ENCODE measurements at regions of chr3 and their contacts with region 1.

Region 1: GRCh38 chr3:111080413-111080812 is 8.8 kb downstream of the NECTIN3 start:
- DNase-seq: peak in 3 of 14 experiments; percentile 34 to 36 (median 35)
- ATAC-seq: no peak
- H3K4me3 ChIP-seq: no peak overlapping the region
- H3K4me3 Mint-ChIP-seq: no peak overlapping the region
- H3K27ac ChIP-seq: no peak overlapping the region
- H3K27ac Mint-ChIP-seq: no peak overlapping the region
- H3K4me1 ChIP-seq: no peaks in the 10 kb centered on the region
- H3K4me1 Mint-ChIP-seq: peaks cover under 1% of the 10 kb centered on the region
- H3K27me3 ChIP-seq: no peaks in the 10 kb centered on the region
- H3K27me3 Mint-ChIP-seq: peaks cover 15% of the 10 kb centered on the region
- CTCF ChIP-seq: peak; percentile 72

Region 2: GRCh38 chr3:109731620-109732473 is 1348.6 kb before region 1 on chr3:
- CTCF ChIA-PET with region 1: no interaction called
- POLR2A ChIA-PET with region 1: no interaction called
- intact Hi-C with region 1: loop called (anchors 2 to 5 kb)
- DNase-seq: peak; percentile 0 to 78 (median 50)
- ATAC-seq: peak; percentile 88
- H3K4me3 ChIP-seq: no peak overlapping the region
- H3K4me3 Mint-ChIP-seq: no peak overlapping the region
- H3K27ac ChIP-seq: no peak overlapping the region
- H3K27ac Mint-ChIP-seq: no peak overlapping the region
- H3K4me1 ChIP-seq: peaks cover 2% of the 10 kb centered on the region
- H3K4me1 Mint-ChIP-seq: peaks cover 13% of the 10 kb centered on the region
- H3K27me3 ChIP-seq: no peaks in the 10 kb centered on the region
- H3K27me3 Mint-ChIP-seq: no peaks in the 10 kb centered on the region
- CTCF ChIP-seq: peak; percentile 90

Region 3: DNA sequence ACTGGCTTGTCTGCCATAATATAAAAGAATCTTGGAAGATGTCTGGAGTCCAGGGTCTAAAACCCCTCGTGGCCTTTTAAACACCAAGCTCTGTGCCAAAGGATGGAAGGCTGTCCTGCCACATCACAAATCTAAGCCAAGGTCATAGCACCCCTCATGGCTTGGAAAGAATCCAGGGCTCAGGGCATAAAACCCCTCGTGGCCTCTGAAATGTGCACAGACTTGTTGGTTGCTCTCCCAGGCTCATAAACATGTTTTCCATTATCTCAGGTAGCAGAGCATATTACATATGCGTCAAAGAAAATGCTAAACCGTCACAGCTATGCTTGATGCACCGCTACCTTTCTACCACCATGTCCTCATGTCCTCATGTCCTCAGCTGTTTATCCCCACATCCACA is 25.6 kb before region 1 on chr3:
- CTCF ChIA-PET with region 1: no interaction called
- POLR2A ChIA-PET with region 1: no interaction called
- intact Hi-C with region 1: no loop called
- DNase-seq: no peak
- ATAC-seq: no peak
- H3K4me3 ChIP-seq: no peak overlapping the region
- H3K4me3 Mint-ChIP-seq: no peak overlapping the region
- H3K27ac ChIP-seq: no peak overlapping the region
- H3K27ac Mint-ChIP-seq: no peak overlapping the region
- H3K4me1 ChIP-seq: no peaks in the 10 kb centered on the region
- H3K4me1 Mint-ChIP-seq: no peaks in the 10 kb centered on the region
- H3K27me3 ChIP-seq: no peaks in the 10 kb centered on the region
- H3K27me3 Mint-ChIP-seq: peaks cover 10% of the 10 kb centered on the region
- CTCF ChIP-seq: no peak

Region 4: GRCh38 chr3:111947231-111947630 is 866.8 kb after region 1 on chr3:
- CTCF ChIA-PET with region 1: no interaction called
- POLR2A ChIA-PET with region 1: no interaction called
- intact Hi-C with region 1: no loop called
- DNase-seq: no peak
- ATAC-seq: no peak
- H3K4me3 ChIP-seq: no peak overlapping the region
- H3K4me3 Mint-ChIP-seq: no peak overlapping the region
- H3K27ac ChIP-seq: no peak overlapping the region
- H3K27ac Mint-ChIP-seq: no peak overlapping the region
- H3K4me1 ChIP-seq: no peaks in the 10 kb centered on the region
- H3K4me1 Mint-ChIP-seq: no peaks in the 10 kb centered on the region
- H3K27me3 ChIP-seq: no peaks in the 10 kb centered on the region
- H3K27me3 Mint-ChIP-seq: no peaks in the 10 kb centered on the region
- CTCF ChIP-seq: no peak